Heart right ventricle (tissue), 16 donors: ENCODE measurements at regions of chr1 and their contacts with region 1.

Region 1: DNA sequence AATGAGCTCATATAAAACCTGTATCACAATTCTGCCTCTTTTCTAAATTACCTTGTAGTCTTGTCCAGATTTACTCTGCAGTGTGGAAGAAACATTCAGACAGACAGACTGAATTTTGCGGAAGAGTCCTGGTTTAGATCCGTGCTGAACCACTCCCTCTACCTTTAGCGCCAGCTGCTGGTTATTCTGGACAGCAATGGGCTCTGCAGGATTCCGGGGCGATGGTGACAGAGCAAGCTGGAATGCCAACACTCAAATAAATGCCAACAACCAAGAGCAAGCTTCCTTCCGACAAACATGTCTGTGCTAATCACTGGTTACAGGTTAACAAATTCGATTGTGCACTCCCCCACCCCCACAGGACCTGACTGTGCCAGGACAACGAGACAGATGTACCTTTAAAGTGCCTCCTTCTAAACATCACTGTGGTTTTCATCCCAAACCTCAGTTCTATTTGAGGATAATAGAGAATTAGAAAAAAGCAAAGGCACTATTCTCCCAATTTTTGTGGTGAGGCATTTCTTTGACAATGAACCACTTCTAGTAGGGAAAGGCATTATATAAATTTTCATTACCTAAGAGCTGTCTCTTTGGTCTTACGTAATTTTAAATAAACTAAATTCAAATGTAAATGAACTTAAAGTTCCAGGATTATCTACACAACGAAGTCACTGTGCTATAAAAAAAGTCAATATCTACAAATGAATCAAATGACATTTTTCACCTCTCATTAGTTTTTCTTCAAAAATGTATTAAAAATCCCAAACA is 90.4 kb downstream of the INTS7 start:
- DNase-seq: peak in 1 of 2 donors; percentile 19
- ATAC-seq: peak; percentile 61 to 90 (median 72)
- H3K4me3 ChIP-seq: no peak overlapping the region
- H3K27ac ChIP-seq: no peak overlapping the region
- H3K4me1 ChIP-seq: peaks cover 0 to 6% (median 0%) of the 10 kb centered on the region in 9 donors
- H3K27me3 ChIP-seq: no peaks in the 10 kb centered on the region
- CTCF ChIP-seq: peak in 8 of 9 donors; percentile 15 to 63 (median 50)

Region 2: GRCh38 chr1:211680752-211681327 is 264.1 kb before region 1 on chr1:
- intact Hi-C with region 1: loop called in 2 of 10 experiments (anchors 5 to 10 kb)
- DNase-seq: peak; percentile 52
- ATAC-seq: peak; percentile 69 to 92 (median 89)
- H3K4me3 ChIP-seq: no peak overlapping the region
- H3K27ac ChIP-seq: no peak overlapping the region
- H3K4me1 ChIP-seq: peaks cover 0 to 10% (median 2%) of the 10 kb centered on the region in 9 donors
- H3K27me3 ChIP-seq: no peaks in the 10 kb centered on the region
- CTCF ChIP-seq: peak; percentile 41 to 78 (median 75)

Region 3: DNA sequence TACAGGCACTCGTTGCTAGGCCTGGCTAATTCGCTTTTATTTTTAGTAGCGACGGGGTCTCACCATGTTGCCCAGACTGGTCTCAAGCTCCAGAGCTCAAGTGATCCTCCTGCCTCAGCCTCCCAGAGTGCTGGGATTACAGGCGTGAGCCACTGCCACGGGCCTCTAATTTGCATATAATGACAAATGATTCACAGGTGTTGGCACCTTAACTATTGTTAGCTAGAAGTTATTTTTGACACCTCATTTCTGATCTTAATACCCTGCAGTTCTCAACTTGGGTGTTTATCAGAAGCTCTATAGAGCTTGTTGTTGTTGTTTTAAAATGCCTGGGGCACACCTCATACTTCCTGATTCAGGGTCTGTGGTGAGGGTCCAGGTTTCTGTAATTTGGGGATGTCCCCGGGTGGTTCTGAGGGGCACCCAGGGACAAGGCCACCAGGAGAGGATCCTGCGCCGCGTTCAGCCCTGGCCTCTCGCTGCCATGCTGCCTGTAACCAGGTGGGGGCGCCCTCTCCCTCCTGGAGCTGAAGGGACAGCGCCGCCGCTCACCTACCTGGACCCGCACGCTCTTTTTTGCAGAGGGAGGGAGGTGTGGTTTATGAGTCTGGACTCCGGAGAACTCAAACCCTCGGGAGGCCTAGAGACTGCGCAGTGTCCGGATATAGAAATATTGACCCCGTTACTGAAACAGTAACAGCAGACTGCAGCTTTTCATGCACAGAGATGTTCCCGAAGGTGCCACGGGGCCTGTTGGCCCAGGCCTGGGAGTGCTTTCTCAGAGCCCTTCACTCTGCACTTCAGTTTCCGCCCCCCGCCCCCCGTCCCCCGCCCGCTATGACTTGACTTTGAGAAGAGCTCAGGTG is 246.5 kb before region 1 on chr1:
- intact Hi-C with region 1: loop called in 6 of 10 experiments (anchors 5 to 10 kb)
- DNase-seq: peak; percentile 64 to 80
- ATAC-seq: peak; percentile 83 to 95 (median 92)
- H3K4me3 ChIP-seq: peak overlapping the region in 4 of 10 donors; percentile 7 to 28 (median 22)
- H3K27ac ChIP-seq: no peak overlapping the region
- H3K4me1 ChIP-seq: peaks cover 0 to 16% (median 4%) of the 10 kb centered on the region in 9 donors
- H3K27me3 ChIP-seq: peaks cover 0 to 8% (median 0%) of the 10 kb centered on the region in 7 donors
- CTCF ChIP-seq: peak; percentile 80 to 98 (median 94)

Region 4: DNA sequence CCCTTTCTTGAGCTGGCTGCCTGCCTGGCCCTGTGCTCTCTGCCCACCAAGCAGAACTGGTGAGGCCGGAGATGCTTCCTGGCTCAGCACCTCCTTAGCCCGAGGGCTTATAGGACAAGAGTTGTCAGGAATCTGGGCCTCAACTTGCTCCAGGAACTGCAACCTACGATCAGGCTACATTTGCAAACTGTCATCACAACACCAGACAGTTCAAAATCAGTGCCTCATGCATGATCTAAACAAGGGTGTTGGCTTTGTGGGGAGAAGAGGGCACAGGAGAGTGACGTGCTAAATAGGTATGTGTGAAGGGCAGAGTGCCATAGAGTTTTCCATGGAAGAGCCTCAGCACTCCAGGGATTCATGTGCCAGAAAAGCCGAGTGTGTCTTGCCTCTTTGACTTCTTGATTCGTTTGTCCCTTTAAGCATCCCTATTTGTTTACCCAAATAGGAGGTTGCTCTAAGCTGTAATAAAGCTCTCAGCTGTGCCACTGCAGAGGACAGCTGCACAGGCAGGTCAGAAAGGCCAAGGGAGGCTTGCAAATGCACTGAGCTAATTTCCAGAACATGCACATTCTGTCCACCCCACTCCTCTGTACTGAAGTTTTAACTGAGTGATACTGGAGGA is 239.3 kb before region 1 on chr1:
- intact Hi-C with region 1: loop called in 1 of 10 experiments (anchors 10 kb)
- DNase-seq: no peak
- ATAC-seq: peak in 4 of 8 donors; percentile 35 to 61 (median 60)
- H3K4me3 ChIP-seq: no peak overlapping the region
- H3K27ac ChIP-seq: no peak overlapping the region
- H3K4me1 ChIP-seq: peaks cover 0 to 6% (median 0%) of the 10 kb centered on the region in 9 donors
- H3K27me3 ChIP-seq: no peaks in the 10 kb centered on the region
- CTCF ChIP-seq: no peak

Region 5: DNA sequence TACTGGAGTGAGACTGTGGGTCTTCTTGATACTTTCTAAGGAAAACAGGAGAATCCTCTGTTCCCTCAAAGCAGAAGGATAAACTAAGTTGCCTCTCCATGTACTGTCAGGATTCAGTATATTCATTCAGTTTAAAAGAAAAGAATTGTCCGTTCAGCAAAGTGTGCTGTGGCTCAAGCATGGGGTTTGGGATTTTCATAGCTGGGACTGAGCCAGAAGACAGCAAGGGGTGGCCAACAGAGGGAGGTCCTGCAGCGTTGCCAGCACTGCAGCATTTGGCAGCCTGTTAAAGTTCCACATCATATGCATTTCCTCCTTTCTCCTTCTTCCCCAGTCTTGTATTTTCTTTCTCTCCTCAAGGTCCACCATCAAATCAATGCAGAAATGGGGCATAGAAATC is 165.7 kb after region 1 on chr1:
- intact Hi-C with region 1: no loop called
- DNase-seq: peak in 1 of 2 donors; percentile 32
- ATAC-seq: peak in 3 of 8 donors; percentile 50 to 74 (median 68)
- H3K4me3 ChIP-seq: no peak overlapping the region
- H3K27ac ChIP-seq: no peak overlapping the region
- H3K4me1 ChIP-seq: peaks cover 0 to 60% (median 36%) of the 10 kb centered on the region in 9 donors
- H3K27me3 ChIP-seq: no peaks in the 10 kb centered on the region
- CTCF ChIP-seq: peak in 5 of 9 donors; percentile 16 to 53 (median 34)